ENCODE measurements at regions of chr6 and their contacts with region 1.

Region 1: GRCh38 chr6:797479-798077 is 104.6 kb upstream of the EXOC2 start:
- DNase-seq: no peak
- H3K4me3 ChIP-seq: no peak overlapping the region
- H3K27ac ChIP-seq: no peak overlapping the region
- H3K4me1 ChIP-seq: no peaks in the 10 kb centered on the region
- H3K27me3 ChIP-seq: peaks cover 0 to 50% of the 10 kb centered on the region in 2 donors
- CTCF ChIP-seq: peak; percentile 60 to 72

Region 2: DNA sequence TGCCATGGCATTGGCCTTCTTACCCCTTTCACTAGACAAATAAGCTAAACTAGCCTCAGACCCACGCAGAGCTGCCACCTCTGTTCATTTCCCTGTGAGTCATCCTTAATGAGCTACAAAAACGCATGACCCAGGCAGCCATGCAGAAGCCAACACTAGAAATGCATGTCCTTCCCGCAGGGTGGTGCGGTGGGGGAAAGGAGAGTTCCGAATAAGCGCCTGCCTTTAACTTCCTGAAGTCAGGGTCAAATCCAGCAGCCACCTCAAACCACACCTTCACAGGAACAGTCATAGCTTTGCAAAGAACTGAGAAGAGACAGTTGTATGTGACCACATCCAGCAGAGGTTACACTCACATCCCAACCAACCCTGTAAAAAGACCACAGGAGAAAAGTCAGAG is 365.6 kb before region 1 on chr6:
- intact Hi-C with region 1: no loop called
- DNase-seq: no peak
- H3K4me3 ChIP-seq: no peak overlapping the region
- H3K27ac ChIP-seq: no peak overlapping the region
- H3K4me1 ChIP-seq: no peaks in the 10 kb centered on the region
- H3K27me3 ChIP-seq: peaks cover 0 to 7% of the 10 kb centered on the region in 2 donors
- CTCF ChIP-seq: no peak

Region 3: GRCh38 chr6:446418-447366 is 350.9 kb before region 1 on chr6:
- intact Hi-C with region 1: no loop called
- DNase-seq: peak in 1 of 2 donors; percentile 5
- H3K4me3 ChIP-seq: no peak overlapping the region
- H3K27ac ChIP-seq: no peak overlapping the region
- H3K4me1 ChIP-seq: no peaks in the 10 kb centered on the region
- H3K27me3 ChIP-seq: peaks cover 0 to 24% of the 10 kb centered on the region in 2 donors
- CTCF ChIP-seq: no peak

Region 4: GRCh38 chr6:1381481-1382330 is 584.1 kb after region 1 on chr6:
- intact Hi-C with region 1: loop called (anchors 5 kb)
- DNase-seq: no peak
- H3K4me3 ChIP-seq: peak overlapping the region in 1 of 2 donors; percentile 39
- H3K27ac ChIP-seq: no peak overlapping the region
- H3K4me1 ChIP-seq: peaks cover 0 to 71% (median 54%) of the 10 kb centered on the region in 4 donors
- H3K27me3 ChIP-seq: peaks cover 9 to 100% of the 10 kb centered on the region in 2 donors
- CTCF ChIP-seq: peak; percentile 74 to 76